GM18951 (cell line): ENCODE measurements at regions of chr18 and their contacts with region 1.

Region 1: DNA sequence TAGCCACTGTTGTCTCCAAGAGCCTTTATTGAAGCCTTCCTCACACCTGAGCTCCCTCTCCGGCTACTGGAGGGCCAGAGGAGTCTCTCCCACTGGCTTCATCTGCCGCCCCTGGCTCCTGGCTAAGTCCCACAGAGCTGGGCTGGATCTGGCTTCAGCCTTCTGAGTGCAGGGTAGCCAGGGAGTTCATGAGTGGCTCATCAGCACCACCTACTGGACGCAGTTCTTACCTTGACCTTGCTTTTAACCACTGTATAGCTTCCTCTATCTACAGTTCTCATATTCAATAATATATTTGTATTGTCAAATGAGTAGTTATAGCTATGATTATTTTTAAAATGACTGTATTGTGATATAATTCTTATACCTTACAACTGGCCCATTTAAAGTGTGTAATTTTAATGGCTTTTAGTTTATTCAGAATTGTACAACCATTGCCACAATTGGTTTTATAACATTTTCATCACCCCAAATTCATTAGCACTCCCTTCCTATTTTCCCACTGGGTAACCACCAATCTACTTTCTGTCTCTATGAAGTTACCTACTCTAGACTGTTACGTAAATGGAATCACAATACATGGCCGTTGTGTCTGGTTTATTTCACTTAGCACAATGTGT is 17.7 kb downstream of the CNDP1 start:
- POLR2A ChIP-seq: no peak

Region 2: DNA sequence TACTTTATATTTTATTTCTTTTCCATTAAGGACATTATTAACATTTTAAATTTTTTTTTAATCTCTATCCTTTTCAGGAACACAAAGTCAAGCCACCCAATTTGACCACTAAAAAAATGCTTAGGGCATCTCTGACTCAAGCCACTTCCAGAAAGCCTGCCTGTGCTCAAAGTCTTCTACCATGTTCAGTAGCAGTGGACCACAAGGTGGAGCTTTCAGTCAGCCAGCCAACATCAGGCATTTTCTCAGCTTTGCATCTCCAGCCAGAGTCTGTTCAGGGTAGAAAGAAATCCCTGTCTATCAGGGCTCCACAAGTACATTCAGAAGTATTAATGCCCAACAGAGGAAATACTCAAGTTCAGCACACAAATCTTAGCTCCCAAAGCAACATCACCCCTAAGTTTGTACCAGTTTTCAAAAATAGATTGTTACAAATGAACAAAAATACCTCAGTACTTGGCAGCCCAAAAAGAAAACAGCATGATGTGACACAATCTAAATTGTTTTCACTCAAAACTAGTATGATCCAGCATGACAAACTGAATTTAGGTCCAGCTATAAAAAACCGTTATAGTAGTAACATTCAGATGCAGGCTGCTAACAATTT is 198.8 kb before region 1 on chr18:
- in situ Hi-C with region 1: loop called (anchors 25 kb)
- POLR2A ChIP-seq: no peak